Naive thymus-derived CD4-positive, alpha-beta T cell (primary cell): ENCODE measurements at regions of chr5 and their contacts with region 1.

Region 1: GRCh38 chr5:144191998-144192397 is 21.3 kb downstream of the KCTD16 start:
- DNase-seq: peak in 7 of 9 donors; percentile 72 to 88 (median 85)
- ATAC-seq: peak; percentile 73
- H3K4me3 ChIP-seq: peak overlapping the region; percentile 2
- H3K4me3 Mint-ChIP-seq: no peak overlapping the region
- H3K27ac ChIP-seq: peak overlapping the region; percentile 67
- H3K27ac Mint-ChIP-seq: no peak overlapping the region
- H3K4me1 ChIP-seq: peaks cover 50 to 51% of the 10 kb centered on the region in 2 donors
- H3K4me1 Mint-ChIP-seq: peaks cover 22 to 45% (median 23%) of the 10 kb centered on the region in 7 donors
- H3K27me3 ChIP-seq: no peaks in the 10 kb centered on the region
- H3K27me3 Mint-ChIP-seq: peaks cover 0 to 2% (median 0%) of the 10 kb centered on the region in 5 donors

Region 2: DNA sequence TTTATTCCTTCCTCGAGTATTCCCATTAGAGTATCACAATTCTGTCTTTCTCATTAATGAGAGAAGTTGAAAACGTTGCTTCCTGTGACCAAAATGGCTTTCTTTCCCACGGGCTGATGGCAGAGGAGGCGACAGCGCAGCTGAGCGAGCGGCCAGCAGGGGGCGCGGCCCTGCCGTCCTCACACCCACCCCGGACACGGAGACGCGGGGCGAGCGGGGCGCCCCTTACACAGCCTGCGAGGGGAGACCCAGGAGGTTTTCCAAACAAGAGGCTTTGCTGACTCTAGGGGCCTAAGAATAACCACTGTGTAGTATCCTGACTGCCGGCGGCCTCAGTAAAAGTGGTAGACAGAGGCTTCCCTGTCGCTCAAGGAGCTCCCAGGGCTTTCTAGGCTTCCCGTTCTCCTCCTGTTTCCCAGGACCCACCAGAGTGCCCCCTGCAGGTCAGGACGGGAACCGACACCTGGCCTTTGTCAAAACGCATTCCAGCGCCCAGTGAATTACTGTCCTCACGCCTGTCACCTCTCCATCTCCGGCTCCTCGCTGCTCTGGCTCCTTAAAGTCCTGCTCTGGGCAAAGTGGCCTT is 1478.8 kb before region 1 on chr5:
- CTCF ChIA-PET with region 1: no interaction called
- POLR2A ChIA-PET with region 1: no interaction called
- intact Hi-C with region 1: loop called in 1 of 2 experiments (anchors 1 kb)
- DNase-seq: peak; percentile 72 to 92 (median 86)
- ATAC-seq: peak; percentile 96
- H3K4me3 ChIP-seq: peak overlapping the region; percentile 61
- H3K4me3 Mint-ChIP-seq: peak overlapping the region; percentile 45 to 82 (median 70)
- H3K27ac ChIP-seq: no peak overlapping the region
- H3K27ac Mint-ChIP-seq: peak overlapping the region in 2 of 9 donors; percentile 39 to 73
- H3K4me1 ChIP-seq: peaks cover 0 to 7% of the 10 kb centered on the region in 2 donors
- H3K4me1 Mint-ChIP-seq: peaks cover 0 to 16% (median 10%) of the 10 kb centered on the region in 7 donors
- H3K27me3 ChIP-seq: no peaks in the 10 kb centered on the region
- H3K27me3 Mint-ChIP-seq: peaks cover 0 to 33% (median 4%) of the 10 kb centered on the region in 5 donors

Region 3: DNA sequence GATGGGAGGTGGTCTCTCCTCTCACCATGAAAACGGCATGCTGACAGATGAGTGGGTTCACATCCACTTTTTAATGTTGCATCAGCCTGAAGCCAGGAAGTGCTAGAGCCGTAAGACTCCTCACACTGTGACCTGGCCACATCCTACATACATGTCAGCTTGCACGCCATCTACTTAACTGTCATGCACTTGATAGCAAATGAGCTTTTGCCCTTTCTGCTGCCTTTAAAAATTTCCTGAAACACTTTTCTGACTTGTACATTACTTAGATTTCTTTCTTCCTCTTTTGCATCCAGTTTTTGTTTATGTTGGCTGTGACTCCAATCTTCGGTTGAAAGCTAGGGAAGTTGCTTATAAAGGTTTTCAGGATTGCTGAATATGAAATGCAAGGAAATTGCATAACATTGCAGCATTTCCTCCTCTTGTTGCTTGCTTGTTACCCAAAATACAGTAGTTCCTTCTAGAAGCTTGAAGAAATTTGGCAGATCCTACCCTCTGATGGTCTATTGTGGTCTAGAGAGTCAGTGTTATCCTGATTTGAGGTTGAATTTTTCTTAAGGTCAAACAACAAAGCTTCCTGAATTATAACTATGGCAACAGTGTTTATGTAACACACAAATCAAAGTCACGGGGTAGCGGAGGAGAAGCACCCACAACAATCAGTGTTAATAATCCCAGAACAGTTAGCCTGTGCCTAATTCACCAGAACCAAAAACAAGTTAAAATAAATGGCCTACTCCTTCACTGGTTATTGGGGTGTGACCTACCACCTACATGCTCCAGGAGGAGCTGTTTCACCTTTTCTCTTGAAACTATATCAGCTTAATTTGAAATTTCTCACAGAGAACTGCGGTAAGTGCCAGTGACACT is 1189.3 kb before region 1 on chr5:
- CTCF ChIA-PET with region 1: interaction called, 11 read pairs
- POLR2A ChIA-PET with region 1: interaction called, 6 read pairs
- intact Hi-C with region 1: loop called (anchors 1 to 2 kb)
- DNase-seq: peak in 8 of 9 donors; percentile 40 to 66 (median 50)
- ATAC-seq: peak; percentile 86
- H3K4me3 ChIP-seq: peak overlapping the region; percentile 3
- H3K4me3 Mint-ChIP-seq: peak overlapping the region; percentile 22 to 80 (median 62)
- H3K27ac ChIP-seq: peak overlapping the region; percentile 68
- H3K27ac Mint-ChIP-seq: peak overlapping the region; percentile 78 to 98 (median 90)
- H3K4me1 ChIP-seq: peaks cover 31 to 66% of the 10 kb centered on the region in 2 donors
- H3K4me1 Mint-ChIP-seq: peaks cover 37 to 90% (median 50%) of the 10 kb centered on the region in 7 donors
- H3K27me3 ChIP-seq: no peaks in the 10 kb centered on the region
- H3K27me3 Mint-ChIP-seq: no peaks in the 10 kb centered on the region

Region 4: GRCh38 chr5:143355720-143356119 is 836.3 kb before region 1 on chr5:
- CTCF ChIA-PET with region 1: no interaction called
- POLR2A ChIA-PET with region 1: no interaction called
- intact Hi-C with region 1: loop called in 1 of 2 experiments (anchors 5 kb)
- DNase-seq: peak in 7 of 9 donors; percentile 43 to 82 (median 63)
- ATAC-seq: peak; percentile 85
- H3K4me3 ChIP-seq: no peak overlapping the region
- H3K4me3 Mint-ChIP-seq: peak overlapping the region in 8 of 10 donors; percentile 9 to 51 (median 39)
- H3K27ac ChIP-seq: no peak overlapping the region
- H3K27ac Mint-ChIP-seq: peak overlapping the region in 8 of 9 donors; percentile 33 to 92 (median 79)
- H3K4me1 ChIP-seq: peaks cover 53 to 60% of the 10 kb centered on the region in 2 donors
- H3K4me1 Mint-ChIP-seq: peaks cover 7 to 84% (median 56%) of the 10 kb centered on the region in 7 donors
- H3K27me3 ChIP-seq: no peaks in the 10 kb centered on the region
- H3K27me3 Mint-ChIP-seq: no peaks in the 10 kb centered on the region

Region 5: DNA sequence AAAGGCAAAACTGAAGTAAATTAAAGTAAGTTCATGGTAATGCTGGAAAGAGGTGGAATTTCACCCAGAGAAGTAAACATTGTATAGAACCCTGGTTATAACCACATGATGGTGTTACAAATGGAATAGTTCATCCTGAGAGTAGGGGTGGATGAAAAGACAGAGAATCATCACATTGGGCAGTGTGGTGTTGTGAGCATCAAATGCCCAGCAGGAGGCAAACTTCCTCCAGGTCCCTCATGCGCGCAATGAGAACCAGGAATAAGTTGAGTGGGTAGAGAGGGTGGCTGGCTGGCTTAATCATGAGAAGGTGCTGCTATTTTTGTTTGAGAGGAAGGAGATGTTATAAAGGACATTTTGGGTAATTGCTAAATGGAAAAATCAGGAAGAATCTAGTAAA is 543.3 kb before region 1 on chr5:
- CTCF ChIA-PET with region 1: interaction called, 4 read pairs
- POLR2A ChIA-PET with region 1: no interaction called
- intact Hi-C with region 1: loop called in 1 of 2 experiments (anchors 5 kb)
- DNase-seq: no peak
- ATAC-seq: no peak
- H3K4me3 ChIP-seq: no peak overlapping the region
- H3K4me3 Mint-ChIP-seq: no peak overlapping the region
- H3K27ac ChIP-seq: no peak overlapping the region
- H3K27ac Mint-ChIP-seq: no peak overlapping the region
- H3K4me1 ChIP-seq: no peaks in the 10 kb centered on the region
- H3K4me1 Mint-ChIP-seq: peaks cover 0 to 4% (median 0%) of the 10 kb centered on the region in 7 donors
- H3K27me3 ChIP-seq: no peaks in the 10 kb centered on the region
- H3K27me3 Mint-ChIP-seq: peaks cover 0 to 6% (median under 1%) of the 10 kb centered on the region in 5 donors

Region 6: GRCh38 chr5:143957455-143957854 is 234.5 kb before region 1 on chr5:
- CTCF ChIA-PET with region 1: no interaction called
- POLR2A ChIA-PET with region 1: no interaction called
- intact Hi-C with region 1: no loop called
- DNase-seq: no peak
- ATAC-seq: no peak
- H3K4me3 ChIP-seq: no peak overlapping the region
- H3K4me3 Mint-ChIP-seq: no peak overlapping the region
- H3K27ac ChIP-seq: no peak overlapping the region
- H3K27ac Mint-ChIP-seq: no peak overlapping the region
- H3K4me1 ChIP-seq: no peaks in the 10 kb centered on the region
- H3K4me1 Mint-ChIP-seq: no peaks in the 10 kb centered on the region
- H3K27me3 ChIP-seq: no peaks in the 10 kb centered on the region
- H3K27me3 Mint-ChIP-seq: peaks cover 0 to 15% (median 7%) of the 10 kb centered on the region in 5 donors

Region 7: DNA sequence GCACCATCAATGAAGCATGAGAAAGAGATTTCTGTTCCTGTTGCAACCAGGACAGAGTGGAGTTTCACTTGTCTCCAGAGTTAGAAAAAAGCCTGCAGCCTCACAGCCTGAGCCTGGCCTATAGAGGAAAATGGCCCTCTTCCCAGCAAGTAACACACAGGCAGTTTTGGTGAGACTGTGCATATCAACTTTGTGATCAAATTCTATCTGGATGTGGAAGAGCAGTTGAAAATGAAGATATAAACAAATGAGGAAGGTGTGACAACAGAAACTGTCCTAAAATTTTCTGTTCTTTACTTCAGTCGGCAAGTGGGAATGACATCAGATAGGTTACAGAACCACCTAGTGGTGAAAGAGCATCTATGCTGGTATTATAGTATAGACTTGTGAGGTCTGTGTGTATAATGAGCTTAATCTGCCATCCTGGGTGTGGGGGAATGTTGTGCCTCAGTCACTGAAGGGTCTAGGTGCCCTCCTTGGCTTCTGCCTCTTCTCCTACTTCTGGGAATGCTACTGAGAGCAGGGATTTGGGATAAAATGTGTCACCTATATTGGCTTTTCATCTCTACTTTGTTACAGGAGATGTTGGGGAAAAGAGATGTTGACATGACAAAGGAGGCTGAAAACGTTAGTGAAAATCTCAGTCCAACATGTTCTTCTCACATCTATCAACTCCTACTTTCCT is 49.7 kb before region 1 on chr5:
- CTCF ChIA-PET with region 1: no interaction called
- POLR2A ChIA-PET with region 1: no interaction called
- intact Hi-C with region 1: loop called in 1 of 2 experiments (anchors 1 kb)
- DNase-seq: peak in 5 of 9 donors; percentile 13 to 32 (median 23)
- ATAC-seq: peak; percentile 88
- H3K4me3 ChIP-seq: no peak overlapping the region
- H3K4me3 Mint-ChIP-seq: peak overlapping the region in 2 of 10 donors; percentile 3 to 47
- H3K27ac ChIP-seq: no peak overlapping the region
- H3K27ac Mint-ChIP-seq: no peak overlapping the region
- H3K4me1 ChIP-seq: no peaks in the 10 kb centered on the region
- H3K4me1 Mint-ChIP-seq: peaks cover 0 to 8% (median 0%) of the 10 kb centered on the region in 7 donors
- H3K27me3 ChIP-seq: no peaks in the 10 kb centered on the region
- H3K27me3 Mint-ChIP-seq: peaks cover 0 to 24% (median 16%) of the 10 kb centered on the region in 5 donors

Region 8: GRCh38 chr5:146137967-146138403 is 1946.0 kb after region 1 on chr5:
- CTCF ChIA-PET with region 1: no interaction called
- POLR2A ChIA-PET with region 1: no interaction called
- intact Hi-C with region 1: no loop called
- DNase-seq: no peak
- ATAC-seq: no peak
- H3K4me3 ChIP-seq: no peak overlapping the region
- H3K4me3 Mint-ChIP-seq: no peak overlapping the region
- H3K27ac ChIP-seq: no peak overlapping the region
- H3K27ac Mint-ChIP-seq: no peak overlapping the region
- H3K4me1 ChIP-seq: no peaks in the 10 kb centered on the region
- H3K4me1 Mint-ChIP-seq: no peaks in the 10 kb centered on the region
- H3K27me3 ChIP-seq: no peaks in the 10 kb centered on the region
- H3K27me3 Mint-ChIP-seq: no peaks in the 10 kb centered on the region

Region 9: DNA sequence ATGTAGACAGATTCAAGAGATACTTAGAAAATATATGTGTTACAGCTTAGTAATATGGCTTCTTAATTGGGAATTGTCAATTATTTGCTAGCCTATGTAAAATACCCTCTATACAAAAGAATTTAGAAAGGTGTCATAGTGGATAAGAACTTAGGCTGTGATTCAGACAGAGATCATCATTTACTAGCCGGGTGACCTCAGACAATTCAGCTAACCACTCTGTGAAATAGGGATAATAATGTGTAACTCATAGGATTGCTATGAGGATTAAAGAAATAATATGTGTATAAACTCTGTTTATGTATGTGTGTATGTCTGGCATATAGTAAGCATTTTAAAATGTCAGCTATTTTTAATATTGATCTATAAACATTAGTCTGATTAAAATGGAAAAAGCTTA is 1996.4 kb after region 1 on chr5:
- CTCF ChIA-PET with region 1: no interaction called
- POLR2A ChIA-PET with region 1: no interaction called
- intact Hi-C with region 1: loop called (anchors 2 to 5 kb)
- DNase-seq: no peak
- ATAC-seq: no peak
- H3K4me3 ChIP-seq: no peak overlapping the region
- H3K4me3 Mint-ChIP-seq: no peak overlapping the region
- H3K27ac ChIP-seq: no peak overlapping the region
- H3K27ac Mint-ChIP-seq: no peak overlapping the region
- H3K4me1 ChIP-seq: no peaks in the 10 kb centered on the region
- H3K4me1 Mint-ChIP-seq: peaks cover 0 to 10% (median 0%) of the 10 kb centered on the region in 7 donors
- H3K27me3 ChIP-seq: no peaks in the 10 kb centered on the region
- H3K27me3 Mint-ChIP-seq: peaks cover 6 to 17% (median 9%) of the 10 kb centered on the region in 5 donors